ENCODE measurements at regions of chr3 and their contacts with region 1.

Region 1: GRCh38 chr3:22284559-22284958 is 533.5 kb upstream of the ZNF385D start:
- DNase-seq: peak; percentile 78
- ATAC-seq: peak; percentile 100
- H3K4me3 ChIP-seq: peak overlapping the region; percentile 33; the same call in 1 of the 2 replicates
- H3K27ac ChIP-seq: peak overlapping the region; percentile 43
- H3K4me1 ChIP-seq: peaks cover 22% of the 10 kb centered on the region
- H3K27me3 ChIP-seq: no peaks in the 10 kb centered on the region
- CTCF ChIP-seq: no peak

Region 2: GRCh38 chr3:22199095-22199494 is 85.5 kb before region 1 on chr3:
- CTCF ChIA-PET with region 1: no interaction called
- POLR2A ChIA-PET with region 1: no interaction called
- intact Hi-C with region 1: loop called (anchors 5 kb)
- DNase-seq: no peak
- ATAC-seq: no peak
- H3K4me3 ChIP-seq: no peak overlapping the region
- H3K27ac ChIP-seq: no peak overlapping the region
- H3K4me1 ChIP-seq: peaks cover 16% of the 10 kb centered on the region; the same call in 1 of the 2 replicates
- H3K27me3 ChIP-seq: no peaks in the 10 kb centered on the region
- CTCF ChIP-seq: no peak

Region 3: GRCh38 chr3:22216601-22217000 is 68.0 kb before region 1 on chr3:
- CTCF ChIA-PET with region 1: no interaction called
- POLR2A ChIA-PET with region 1: no interaction called
- intact Hi-C with region 1: loop called (anchors 2 kb)
- DNase-seq: no peak
- ATAC-seq: no peak
- H3K4me3 ChIP-seq: no peak overlapping the region
- H3K27ac ChIP-seq: no peak overlapping the region
- H3K4me1 ChIP-seq: 0 out of 2 replicates have a peak, but pooled peaks cover 11% of the 10 kb centered on the region
- H3K27me3 ChIP-seq: no peaks in the 10 kb centered on the region
- CTCF ChIP-seq: no peak

Region 4: DNA sequence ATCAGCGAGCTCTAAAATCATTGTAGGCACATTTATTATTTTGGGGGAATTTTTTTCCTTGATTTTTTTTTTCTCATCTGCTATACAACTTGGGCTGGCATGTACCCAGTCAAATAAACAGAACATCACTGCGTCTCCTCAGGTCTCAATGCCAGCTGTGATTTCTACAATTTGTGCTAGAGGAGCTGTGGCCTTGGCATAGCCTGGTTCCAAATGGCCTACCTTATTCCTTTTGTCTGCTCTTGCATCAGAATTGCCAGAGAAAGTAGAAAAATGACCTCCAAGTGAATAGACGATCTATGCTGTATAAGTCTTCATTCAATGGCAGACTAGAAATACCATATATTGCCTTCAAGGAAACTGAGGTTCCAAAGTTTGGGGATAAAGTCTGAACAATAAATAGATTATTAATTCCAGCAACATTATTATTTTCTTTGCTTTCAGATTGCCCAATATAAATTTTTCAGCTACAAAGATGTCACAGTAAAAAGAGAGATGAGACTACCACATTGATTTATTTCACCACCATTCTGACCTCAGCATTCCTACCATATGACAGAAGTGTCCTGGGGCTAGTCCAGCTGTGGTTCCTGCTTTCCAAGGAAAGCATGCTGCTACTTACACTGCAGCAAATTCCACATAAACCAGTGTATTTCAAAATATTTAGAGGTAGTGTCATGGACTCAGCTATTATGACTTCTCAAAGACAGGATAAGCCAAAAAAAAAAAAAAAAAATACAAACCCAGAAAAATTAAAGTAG is 39.6 kb before region 1 on chr3:
- CTCF ChIA-PET with region 1: no interaction called
- POLR2A ChIA-PET with region 1: no interaction called
- intact Hi-C with region 1: loop called (anchors 1 kb)
- DNase-seq: peak; percentile 93
- ATAC-seq: peak; percentile 96
- H3K4me3 ChIP-seq: no peak overlapping the region
- H3K27ac ChIP-seq: no peak overlapping the region
- H3K4me1 ChIP-seq: peaks cover 18% of the 10 kb centered on the region
- H3K27me3 ChIP-seq: no peaks in the 10 kb centered on the region
- CTCF ChIP-seq: no peak

Region 5: DNA sequence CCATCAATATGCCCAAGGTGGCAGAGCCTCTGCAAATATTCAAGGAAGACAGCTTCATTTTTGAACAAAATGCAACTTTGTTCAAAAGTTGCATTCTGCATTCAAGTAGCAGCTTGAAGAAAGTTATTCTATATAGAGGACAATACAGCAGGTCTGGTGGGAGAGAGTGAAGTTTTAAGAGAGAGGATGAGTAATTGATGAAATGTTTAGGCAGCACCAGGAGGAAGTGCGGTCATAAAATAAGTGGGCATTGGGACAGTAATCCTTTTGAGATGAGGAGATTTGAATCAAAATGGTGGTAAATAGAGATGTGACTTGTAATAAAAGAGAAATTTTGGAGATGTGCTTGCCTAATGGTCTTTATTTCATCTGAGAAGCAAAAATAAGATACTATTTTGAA is 73.8 kb after region 1 on chr3:
- CTCF ChIA-PET with region 1: no interaction called
- POLR2A ChIA-PET with region 1: no interaction called
- intact Hi-C with region 1: loop called (anchors 5 kb)
- DNase-seq: peak; percentile 54
- ATAC-seq: peak; percentile 85
- H3K4me3 ChIP-seq: peak overlapping the region; percentile 16; the same call in 1 of the 2 replicates
- H3K27ac ChIP-seq: peak overlapping the region; percentile 38; the same call in 1 of the 2 replicates
- H3K4me1 ChIP-seq: peaks cover 17% of the 10 kb centered on the region
- H3K27me3 ChIP-seq: no peaks in the 10 kb centered on the region
- CTCF ChIP-seq: no peak

Region 6: DNA sequence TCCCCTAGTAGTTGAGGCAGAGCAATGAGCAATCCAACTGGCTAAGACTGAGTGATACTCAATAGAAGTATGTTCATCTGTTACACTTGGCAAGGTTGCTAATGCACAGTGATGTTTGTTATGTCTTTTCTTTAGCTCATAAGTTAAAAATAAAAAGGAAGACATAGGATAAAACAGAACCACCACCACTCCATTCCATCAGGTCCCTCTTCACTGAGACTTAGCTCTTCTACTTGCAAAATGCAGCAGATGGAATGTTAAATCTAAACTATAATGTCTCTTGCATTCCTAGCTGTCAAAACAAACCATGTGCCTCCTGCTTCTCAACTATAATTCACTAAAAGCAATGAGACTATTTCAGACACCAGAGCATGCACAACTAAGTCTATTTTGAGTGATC is 653.0 kb after region 1 on chr3:
- CTCF ChIA-PET with region 1: no interaction called
- POLR2A ChIA-PET with region 1: interaction called, 11 read pairs
- intact Hi-C with region 1: no loop called
- DNase-seq: no peak
- ATAC-seq: no peak
- H3K4me3 ChIP-seq: no peak overlapping the region
- H3K27ac ChIP-seq: no peak overlapping the region
- H3K4me1 ChIP-seq: no peaks in the 10 kb centered on the region
- H3K27me3 ChIP-seq: 0 out of 2 replicates have a peak, but pooled peaks cover 2% of the 10 kb centered on the region
- CTCF ChIP-seq: no peak

Measured in PC-3 (cell line).